Ascending aorta (tissue), 2 donors: ENCODE measurements at regions of chr1 and their contacts with region 1.

Region 1: DNA sequence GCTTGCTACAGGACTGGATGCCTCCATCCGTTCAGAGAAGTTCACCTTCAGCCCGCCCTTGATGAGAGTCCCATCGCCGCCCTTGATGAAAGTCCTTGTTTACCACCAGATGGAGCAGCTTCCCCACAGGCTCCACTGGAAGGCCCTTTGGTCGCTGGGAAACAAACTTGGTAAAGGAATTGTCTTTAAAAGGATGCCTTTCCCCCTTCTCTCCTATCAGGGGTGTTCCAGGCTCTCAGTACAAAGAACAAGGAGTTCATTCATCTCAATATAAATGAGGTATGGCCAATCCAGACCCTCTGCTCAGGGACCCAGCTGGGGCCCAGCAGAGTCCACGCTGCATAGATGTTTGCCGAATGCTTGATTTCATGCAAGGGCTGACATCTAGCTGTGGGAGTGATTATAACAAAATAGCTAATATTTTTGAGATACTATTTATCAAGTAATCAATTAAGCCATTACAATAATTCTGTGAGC is 50.8 kb downstream of the CAPN9 start:
- DNase-seq: peak in 1 of 2 donors; percentile 79
- H3K4me3 ChIP-seq: no peak overlapping the region
- H3K27ac ChIP-seq: no peak overlapping the region
- H3K4me1 ChIP-seq: no peaks in the 10 kb centered on the region
- H3K27me3 ChIP-seq: no peaks in the 10 kb centered on the region
- CTCF ChIP-seq: peak; percentile 73 to 90 (median 78)

Region 2: GRCh38 chr1:229109320-229109761 is 1688.6 kb before region 1 on chr1:
- intact Hi-C with region 1: no loop called
- DNase-seq: peak; percentile 35 to 81
- H3K4me3 ChIP-seq: no peak overlapping the region
- H3K27ac ChIP-seq: peak overlapping the region; percentile 86 to 88
- H3K4me1 ChIP-seq: peaks cover 27 to 59% of the 10 kb centered on the region in 2 donors
- H3K27me3 ChIP-seq: no peaks in the 10 kb centered on the region
- CTCF ChIP-seq: no peak

Region 3: DNA sequence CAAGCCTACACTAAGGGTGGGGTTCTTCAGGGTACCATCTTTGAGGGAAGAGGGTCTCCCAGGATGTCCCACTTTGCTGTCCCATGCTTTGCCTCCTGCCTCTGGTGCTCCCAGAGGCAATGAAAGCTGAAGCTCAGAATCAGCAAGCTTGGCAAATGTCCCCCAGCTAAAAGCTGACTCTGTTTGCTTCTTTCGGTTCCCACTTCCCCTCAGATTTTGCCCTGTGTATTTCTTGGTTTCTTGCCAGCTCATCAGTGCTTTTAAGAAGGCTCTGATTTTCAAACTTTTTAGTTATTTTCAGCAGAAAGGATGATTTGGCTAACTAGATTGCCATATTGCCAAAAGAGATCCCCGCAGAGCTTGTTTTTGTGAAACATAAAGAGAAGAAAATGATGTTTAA is 188.8 kb before region 1 on chr1:
- intact Hi-C with region 1: no loop called
- DNase-seq: no peak
- H3K4me3 ChIP-seq: no peak overlapping the region
- H3K27ac ChIP-seq: no peak overlapping the region
- H3K4me1 ChIP-seq: no peaks in the 10 kb centered on the region
- H3K27me3 ChIP-seq: no peaks in the 10 kb centered on the region
- CTCF ChIP-seq: no peak

Region 4: DNA sequence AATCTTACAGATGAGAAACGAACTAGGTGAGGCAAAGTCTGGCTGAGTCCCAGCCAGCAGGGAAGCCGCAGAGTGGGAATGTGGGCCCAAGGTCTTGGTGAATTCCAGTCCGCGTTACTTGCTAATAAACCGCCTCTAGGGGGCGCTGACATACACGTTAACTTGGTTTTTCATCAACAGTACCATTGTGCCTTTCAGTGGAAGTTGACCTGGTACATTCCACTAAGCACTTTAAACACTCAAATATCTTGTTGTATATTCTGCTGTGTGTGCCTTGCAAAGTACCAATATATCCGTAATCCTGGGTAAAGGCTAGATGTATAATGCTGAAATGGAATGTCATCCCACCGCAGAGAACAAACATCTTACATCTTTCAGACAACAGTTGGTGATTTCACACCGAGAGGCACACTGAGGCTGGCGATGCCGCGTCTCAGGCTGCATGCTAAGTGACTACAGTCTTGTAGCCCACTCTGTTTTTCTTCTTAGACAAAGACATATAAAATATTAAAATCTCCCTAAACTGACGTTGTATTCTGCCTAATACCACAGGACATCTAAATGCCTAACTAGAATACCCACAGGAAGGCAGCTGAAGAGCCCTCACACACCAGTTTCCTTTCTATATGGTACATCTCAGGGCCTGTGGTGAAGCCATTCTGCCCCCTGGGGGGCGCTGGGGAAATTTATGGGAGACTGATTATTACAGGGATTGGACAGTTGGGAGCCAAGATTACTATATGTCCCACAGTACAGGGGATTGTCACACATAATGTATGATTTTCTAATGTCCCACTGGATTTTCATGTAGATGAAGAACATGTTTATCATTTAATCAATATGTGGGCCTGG is 119.5 kb after region 1 on chr1:
- intact Hi-C with region 1: loop called (anchors 1 kb)
- DNase-seq: peak in 1 of 2 donors; percentile 87
- H3K4me3 ChIP-seq: no peak overlapping the region
- H3K27ac ChIP-seq: no peak overlapping the region
- H3K4me1 ChIP-seq: peaks cover 0 to 5% of the 10 kb centered on the region in 2 donors
- H3K27me3 ChIP-seq: no peaks in the 10 kb centered on the region
- CTCF ChIP-seq: peak; percentile 58 to 62 (median 62)